Right ventricle myocardium inferior (tissue), 1 donor: ENCODE measurements at regions of chr12 and their contacts with region 1.

Region 1: GRCh38 chr12:70719672-70720420 is 82.6 kb upstream of the PTPRB start:
- DNase-seq: peak; percentile 62
- ATAC-seq: no peak

Region 2: DNA sequence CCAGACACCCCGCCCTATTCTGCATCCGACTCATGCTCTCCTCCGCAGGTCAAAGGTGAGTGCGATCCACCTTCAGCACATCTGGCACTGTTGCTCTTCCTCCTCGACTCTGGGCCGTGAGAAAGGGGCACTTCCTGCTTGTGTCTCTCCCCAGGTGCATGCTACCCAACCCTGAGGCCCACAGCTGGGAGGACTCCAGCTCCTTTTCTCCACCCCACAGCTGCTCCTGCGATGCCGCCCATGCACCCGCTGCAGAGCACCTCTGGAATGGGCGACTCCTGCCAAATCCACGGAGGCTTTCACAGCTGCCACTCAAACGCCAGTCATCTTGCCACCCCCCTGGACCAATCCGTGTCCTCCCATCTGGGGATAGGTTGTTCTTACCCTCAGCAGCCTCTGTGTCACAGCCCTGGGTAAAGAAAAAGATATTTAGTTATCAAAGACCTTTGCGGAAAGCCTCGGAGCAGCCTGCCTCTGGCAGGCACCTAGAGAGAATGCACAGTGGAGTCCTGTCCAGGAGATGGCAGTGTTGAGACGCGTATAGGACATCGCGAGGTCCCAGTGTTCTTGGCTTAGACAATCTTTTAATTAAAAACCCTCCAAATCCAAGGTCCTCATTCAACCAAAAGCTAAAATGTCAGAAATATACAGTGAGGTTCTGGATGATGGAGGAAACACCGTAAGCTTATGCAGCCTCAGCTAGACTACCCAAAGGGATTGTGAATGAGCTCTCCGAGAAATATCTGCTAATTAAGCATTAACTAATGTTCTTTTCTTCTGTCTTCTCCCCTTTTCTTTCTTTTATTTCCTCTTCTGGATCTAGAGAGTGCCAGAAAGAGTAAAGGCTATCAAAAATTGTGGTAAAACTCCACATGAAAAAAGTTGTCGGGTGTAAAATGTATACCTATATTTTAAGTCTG is 840.5 kb before region 1 on chr12:
- intact Hi-C with region 1: loop called (anchors 5 kb)
- DNase-seq: peak; percentile 72
- ATAC-seq: peak; percentile 95

Region 3: DNA sequence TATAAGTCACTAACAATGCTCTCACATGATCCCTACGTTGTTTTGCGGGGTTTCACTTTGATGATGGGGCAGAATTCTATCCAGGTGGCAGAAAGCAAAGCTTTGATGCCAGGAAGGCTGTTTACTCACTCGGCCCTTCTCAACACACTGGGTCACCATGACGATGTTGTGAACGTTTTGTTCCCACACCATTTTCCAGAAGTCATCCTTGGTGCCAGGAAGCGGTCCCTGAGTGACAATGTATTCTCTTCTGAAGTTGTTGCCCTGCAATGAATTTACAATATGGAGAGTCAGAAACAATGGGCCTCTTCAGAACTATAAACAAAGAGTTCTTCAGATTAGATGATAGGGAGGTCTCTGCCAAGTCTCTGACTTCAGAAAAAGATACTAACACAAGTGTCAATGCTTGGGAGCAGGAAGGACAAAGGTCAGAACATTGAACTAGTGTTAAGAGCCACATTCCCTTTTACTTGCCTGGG is 183.9 kb before region 1 on chr12:
- intact Hi-C with region 1: loop called (anchors 5 kb)
- DNase-seq: no peak
- ATAC-seq: peak; percentile 43

Region 4: DNA sequence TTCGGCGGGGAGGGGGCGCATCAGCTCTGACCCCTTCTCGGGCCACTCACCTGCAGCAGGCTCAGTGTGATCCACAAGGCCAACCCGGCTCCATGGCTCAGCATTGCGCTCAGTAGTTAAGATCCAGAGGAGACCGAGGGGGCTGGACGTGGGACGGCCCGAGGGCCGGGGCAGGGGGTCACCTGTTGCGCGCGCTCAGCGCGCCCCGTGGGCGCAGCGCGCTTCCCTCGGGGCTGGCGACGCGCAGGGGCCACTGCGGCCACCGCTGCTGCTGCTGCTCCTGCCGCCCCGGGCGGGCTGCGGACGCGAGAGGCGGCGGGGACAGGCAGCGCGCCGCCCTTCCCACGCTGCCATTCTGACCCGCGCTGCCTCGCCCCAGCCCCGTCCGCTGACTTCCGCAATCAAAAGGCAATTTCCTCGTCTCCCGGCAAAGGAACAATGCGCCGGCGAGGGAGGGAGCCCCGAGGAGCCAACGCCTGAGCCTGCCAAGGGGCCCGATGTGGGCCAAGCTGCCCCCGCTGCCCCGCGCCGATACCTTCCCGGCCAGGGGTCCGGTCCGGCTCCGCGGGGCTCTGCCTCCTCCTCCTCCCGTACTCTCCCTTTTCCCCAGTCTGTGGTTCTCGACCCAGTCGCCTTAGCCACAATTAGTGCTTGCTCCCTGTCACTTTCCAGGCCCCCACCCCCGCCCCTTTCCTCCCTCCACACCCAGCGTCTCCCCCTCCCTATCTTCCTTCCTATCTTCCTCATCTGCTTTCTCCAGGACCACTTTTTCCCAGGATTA is 109.9 kb before region 1 on chr12:
- intact Hi-C with region 1: loop called (anchors 5 kb)
- DNase-seq: peak; percentile 71
- ATAC-seq: peak; percentile 72

Region 5: GRCh38 chr12:70686299-70686698 is 33.5 kb before region 1 on chr12:
- intact Hi-C with region 1: no loop called
- DNase-seq: no peak
- ATAC-seq: no peak

Region 6: DNA sequence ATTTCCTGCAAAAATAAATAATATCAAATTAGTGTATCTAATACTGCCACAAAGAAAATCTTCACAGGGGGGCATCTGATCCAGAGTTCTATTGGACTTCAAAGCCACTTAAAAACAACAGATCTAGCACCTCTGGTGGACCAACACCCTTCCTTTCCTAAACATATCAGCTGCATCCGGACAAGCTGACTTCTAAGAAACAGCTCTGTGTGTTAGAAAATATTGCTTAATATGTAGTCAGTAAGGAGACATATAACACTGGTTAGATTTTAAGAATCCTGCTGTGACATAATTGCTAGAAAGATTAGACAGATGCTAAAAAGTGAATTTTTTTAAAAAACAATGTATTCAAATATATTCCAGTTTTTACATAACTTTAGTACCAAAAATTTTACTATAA is 21.5 kb before region 1 on chr12:
- intact Hi-C with region 1: loop called (anchors 2 kb)
- DNase-seq: no peak
- ATAC-seq: no peak

Region 7: GRCh38 chr12:70763666-70764065 is 43.8 kb after region 1 on chr12:
- intact Hi-C with region 1: no loop called
- DNase-seq: no peak
- ATAC-seq: no peak

Region 8: DNA sequence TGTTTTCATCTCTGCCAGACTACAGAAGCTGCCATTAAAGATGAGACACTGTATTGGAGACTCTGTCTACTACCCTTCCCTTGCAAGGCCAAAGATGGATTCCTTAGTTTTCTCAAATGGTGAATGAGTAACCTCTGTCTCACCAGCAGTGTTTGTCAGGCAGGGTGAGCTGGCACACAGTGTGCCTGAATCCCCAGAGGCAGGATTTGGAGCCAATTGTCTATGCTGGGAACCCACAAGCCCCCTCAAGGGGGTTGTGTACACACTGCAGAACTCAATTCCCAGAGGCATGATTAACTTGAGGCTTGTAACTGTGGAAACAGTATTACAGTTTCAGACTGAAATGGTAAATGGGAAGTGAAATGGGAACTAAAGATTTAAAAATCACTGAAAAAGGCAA is 54.2 kb after region 1 on chr12:
- intact Hi-C with region 1: no loop called
- DNase-seq: no peak
- ATAC-seq: no peak

Region 9: DNA sequence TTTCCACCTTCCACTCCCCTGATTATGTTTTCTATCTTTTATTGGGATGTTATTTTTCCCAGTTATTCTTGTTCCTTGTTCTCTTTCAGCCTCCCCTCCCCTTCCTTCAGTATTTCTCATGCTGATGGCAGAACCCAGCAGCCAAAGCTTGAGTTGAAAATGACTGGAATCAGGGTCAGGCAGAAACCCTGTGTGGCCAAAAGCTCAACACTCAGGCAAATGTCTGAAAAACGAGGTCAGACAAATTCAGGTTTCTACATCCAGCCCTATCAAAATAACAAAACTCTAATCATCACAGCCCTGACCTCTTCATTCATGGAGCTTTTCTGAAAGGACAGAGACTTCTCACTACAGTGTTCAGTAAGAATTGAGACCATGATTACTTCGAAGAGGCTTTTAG is 66.0 kb after region 1 on chr12:
- intact Hi-C with region 1: no loop called
- DNase-seq: no peak
- ATAC-seq: no peak